ENCODE measurements at regions of chr1 and their contacts with region 1.

Region 1: DNA sequence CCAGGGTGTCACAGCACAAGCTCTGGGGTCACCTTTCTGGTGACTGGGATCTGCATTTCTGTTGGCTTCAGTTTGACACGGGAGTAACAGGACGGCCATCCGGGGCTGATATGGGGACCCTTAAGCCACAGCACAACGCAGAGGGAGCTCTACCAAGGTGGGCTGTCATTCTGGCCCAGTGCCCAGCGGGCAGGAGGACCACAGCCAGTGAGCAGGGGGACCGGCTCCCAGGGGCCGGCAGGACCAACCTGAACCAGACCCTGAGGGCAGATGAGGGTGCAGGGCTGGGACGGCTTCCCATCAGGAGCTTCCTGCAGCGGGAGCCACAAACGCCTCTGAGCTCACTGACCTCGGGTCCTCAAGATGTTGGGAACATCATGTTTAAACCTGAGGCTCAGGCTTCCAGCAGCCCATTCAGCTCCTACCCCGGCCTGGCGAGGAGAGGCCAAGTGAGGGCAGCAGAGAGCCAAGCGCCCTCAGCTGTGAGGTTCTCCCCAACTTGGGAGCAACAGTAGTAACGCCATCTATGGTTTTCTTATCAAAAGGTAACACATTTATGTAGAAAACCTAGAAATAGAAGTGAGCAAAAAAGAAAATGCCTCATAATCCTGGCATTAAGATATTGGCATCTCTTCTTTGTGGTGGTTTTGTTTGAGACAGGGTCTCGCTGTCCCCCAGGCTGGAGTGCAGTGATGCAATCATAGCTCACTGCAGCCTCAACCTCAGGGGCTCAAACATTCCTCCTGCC is 26.8 kb downstream of the TMEM201 start:
- DNase-seq: peak; percentile 69
- H3K4me3 ChIP-seq: no peak overlapping the region
- H3K27ac ChIP-seq: no peak overlapping the region; a peak in 1 of 4 replicates
- H3K4me1 ChIP-seq: peaks cover 0 to 35% of the 10 kb centered on the region in 2 experiments; a peak in 1 of 4 replicates
- H3K27me3 ChIP-seq: no peaks in the 10 kb centered on the region
- CTCF ChIP-seq: peak; percentile 55
- EP300 ChIP-seq: no peak
- RAD21 ChIP-seq: peak; percentile 29; the same call in 1 of the 2 replicates

Region 2: GRCh38 chr1:9529190-9529589 is 86.3 kb before region 1 on chr1:
- CTCF ChIA-PET with region 1: no interaction called
- POLR2A ChIA-PET with region 1: no interaction called
- DNase-seq: no peak
- H3K4me3 ChIP-seq: no peak overlapping the region
- H3K27ac ChIP-seq: no peak overlapping the region
- H3K4me1 ChIP-seq: peaks cover 0 to 10% of the 10 kb centered on the region in 2 experiments; a peak in 1 of 4 replicates
- H3K27me3 ChIP-seq: no peaks in the 10 kb centered on the region
- CTCF ChIP-seq: no peak
- EP300 ChIP-seq: no peak
- RAD21 ChIP-seq: no peak

Region 3: DNA sequence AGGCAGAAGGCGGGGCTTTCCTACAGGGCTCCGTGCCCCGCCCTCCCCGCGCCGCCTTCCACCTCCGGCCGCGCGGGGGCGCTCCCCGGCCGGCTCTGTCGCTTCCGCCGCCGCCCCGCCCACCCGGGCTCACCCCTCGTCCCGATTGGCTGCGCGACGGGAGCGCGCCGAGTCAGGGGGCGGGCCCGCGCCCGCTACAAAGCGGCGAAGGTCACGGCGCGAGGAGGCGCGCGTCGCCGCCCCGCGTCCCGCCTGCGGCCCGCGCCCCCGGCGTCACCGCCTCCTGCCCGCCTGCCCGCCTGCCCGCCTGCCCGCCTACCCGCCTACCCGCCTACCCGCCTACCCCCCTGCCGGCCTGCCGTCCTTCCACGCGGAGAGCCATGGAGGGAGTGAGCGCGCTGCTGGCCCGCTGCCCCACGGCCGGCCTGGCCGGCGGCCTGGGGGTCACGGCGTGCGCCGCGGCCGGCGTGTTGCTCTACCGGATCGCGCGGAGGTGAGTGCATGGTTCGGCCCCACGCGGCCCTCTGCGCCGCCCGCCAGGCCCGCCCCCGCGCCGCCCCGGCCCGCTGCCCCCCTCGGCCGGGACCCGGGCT is 26.8 kb before region 1 on chr1 and contains the start of gene TMEM201:
- CTCF ChIA-PET with region 1: interaction called, 11 read pairs
- POLR2A ChIA-PET with region 1: interaction called, 3 read pairs
- DNase-seq: peak; percentile 98
- H3K4me3 ChIP-seq: peak within 1 kb of the TSS; percentile 70 to 79
- H3K27ac ChIP-seq: peak within 1 kb of the TSS; percentile 33 to 93
- H3K4me1 ChIP-seq: peaks cover 23 to 42% of the 10 kb centered on the region in 2 experiments; a peak in 3 of 4 replicates
- H3K27me3 ChIP-seq: no peaks in the 10 kb centered on the region
- CTCF ChIP-seq: peak; percentile 63
- EP300 ChIP-seq: no peak
- RAD21 ChIP-seq: peak; percentile 52
- polyA plus RNA-seq, gene TMEM201: 3.0 and 8.2 TPM in 2 replicates

Region 4: DNA sequence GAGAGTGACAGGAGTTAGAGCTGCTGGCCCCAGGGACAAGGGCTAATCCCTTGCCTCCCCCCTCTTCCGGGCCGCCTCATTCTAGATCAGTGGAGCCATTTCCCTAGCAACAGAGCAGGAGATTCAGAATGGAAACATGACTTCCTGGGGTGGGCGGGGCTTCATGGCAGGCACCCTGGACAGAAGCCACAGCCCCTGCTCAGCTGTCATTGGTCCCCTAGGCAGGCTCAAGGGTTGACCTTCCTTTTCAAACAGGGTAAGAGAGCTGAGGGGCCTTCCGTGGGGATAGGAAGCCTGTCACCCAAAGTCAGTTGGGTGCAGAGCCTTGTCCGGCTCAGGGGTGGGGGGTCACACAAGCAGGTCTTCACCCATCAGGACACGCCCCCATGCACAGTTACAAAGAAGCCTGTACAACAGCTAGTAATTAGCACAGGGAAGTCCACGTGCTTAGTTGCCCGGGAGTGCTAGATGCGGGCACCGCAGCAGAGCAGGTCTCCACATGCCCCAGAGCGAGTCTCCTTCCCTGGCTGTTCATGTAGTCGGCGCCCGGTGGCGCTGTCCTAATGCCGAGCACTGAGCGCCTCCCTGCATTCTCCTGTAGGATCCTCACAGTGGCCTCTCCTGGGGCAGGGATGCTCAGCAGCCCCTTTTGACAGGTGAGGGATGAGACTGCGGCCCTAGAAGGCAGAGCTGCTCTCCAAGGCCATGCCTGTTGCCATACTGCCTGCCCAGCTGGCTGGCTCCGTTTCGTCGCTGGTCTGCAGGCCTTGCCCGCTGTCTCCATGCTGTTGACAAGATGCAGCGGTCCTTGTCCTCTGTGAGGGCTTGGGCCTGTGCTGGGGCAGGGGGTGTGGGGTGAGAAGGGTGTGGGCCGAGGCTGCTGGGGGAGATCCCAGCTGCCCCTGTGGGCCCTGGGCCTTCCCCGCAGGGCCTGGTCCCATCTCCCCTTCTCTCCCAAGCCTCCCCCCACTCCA is 21.7 kb before region 1 on chr1:
- CTCF ChIA-PET with region 1: interaction called, 11 read pairs
- POLR2A ChIA-PET with region 1: interaction called, 3 read pairs
- DNase-seq: peak; percentile 93
- H3K4me3 ChIP-seq: no peak overlapping the region; a peak in 1 of 4 replicates
- H3K27ac ChIP-seq: peak overlapping the region; percentile 45 to 93
- H3K4me1 ChIP-seq: peaks cover 26 to 76% of the 10 kb centered on the region in 2 experiments; a peak in 3 of 4 replicates
- H3K27me3 ChIP-seq: no peaks in the 10 kb centered on the region
- CTCF ChIP-seq: no peak
- EP300 ChIP-seq: 0 out of 4 replicates have a peak, but pooled peaks of 1 of the 2 experiments have one; percentile 25
- RAD21 ChIP-seq: no peak

Region 5: DNA sequence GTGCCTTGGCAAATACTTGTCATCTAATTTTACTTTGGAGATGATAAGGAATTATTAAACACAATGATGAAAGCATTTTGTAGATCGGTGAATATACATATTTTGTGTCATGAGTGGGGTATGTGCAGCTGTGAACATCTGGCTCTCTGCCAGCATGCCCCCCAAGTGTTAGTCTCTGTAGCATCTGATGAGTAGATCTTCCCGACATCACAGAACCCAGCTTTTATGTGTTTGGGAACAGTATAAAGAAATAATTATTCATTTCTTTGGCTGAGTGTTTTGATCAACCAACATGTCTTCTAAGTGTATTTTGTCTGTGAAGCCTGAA is 299.1 kb after region 1 on chr1:
- CTCF ChIA-PET with region 1: no interaction called
- POLR2A ChIA-PET with region 1: no interaction called
- DNase-seq: no peak
- H3K4me3 ChIP-seq: no peak overlapping the region
- H3K27ac ChIP-seq: no peak overlapping the region
- H3K4me1 ChIP-seq: peaks cover 2 to 4% of the 10 kb centered on the region in 2 experiments; a peak in 2 of 4 replicates
- H3K27me3 ChIP-seq: no peaks in the 10 kb centered on the region
- CTCF ChIP-seq: no peak; the same call in 1 of the 2 replicates
- EP300 ChIP-seq: no peak
- RAD21 ChIP-seq: no peak